ENCODE measurements at regions of chr3 and their contacts with region 1.

Region 1: GRCh38 chr3:186821429-186822367 is 15.4 kb upstream of the RFC4 start:
- DNase-seq: peak; percentile 60
- H3K4me3 Mint-ChIP-seq: no peak overlapping the region
- H3K27ac Mint-ChIP-seq: no peak overlapping the region
- H3K4me1 Mint-ChIP-seq: peaks cover 30% of the 10 kb centered on the region
- H3K27me3 Mint-ChIP-seq: peaks cover 34% of the 10 kb centered on the region
- CTCF ChIP-seq: peak; percentile 57

Region 2: DNA sequence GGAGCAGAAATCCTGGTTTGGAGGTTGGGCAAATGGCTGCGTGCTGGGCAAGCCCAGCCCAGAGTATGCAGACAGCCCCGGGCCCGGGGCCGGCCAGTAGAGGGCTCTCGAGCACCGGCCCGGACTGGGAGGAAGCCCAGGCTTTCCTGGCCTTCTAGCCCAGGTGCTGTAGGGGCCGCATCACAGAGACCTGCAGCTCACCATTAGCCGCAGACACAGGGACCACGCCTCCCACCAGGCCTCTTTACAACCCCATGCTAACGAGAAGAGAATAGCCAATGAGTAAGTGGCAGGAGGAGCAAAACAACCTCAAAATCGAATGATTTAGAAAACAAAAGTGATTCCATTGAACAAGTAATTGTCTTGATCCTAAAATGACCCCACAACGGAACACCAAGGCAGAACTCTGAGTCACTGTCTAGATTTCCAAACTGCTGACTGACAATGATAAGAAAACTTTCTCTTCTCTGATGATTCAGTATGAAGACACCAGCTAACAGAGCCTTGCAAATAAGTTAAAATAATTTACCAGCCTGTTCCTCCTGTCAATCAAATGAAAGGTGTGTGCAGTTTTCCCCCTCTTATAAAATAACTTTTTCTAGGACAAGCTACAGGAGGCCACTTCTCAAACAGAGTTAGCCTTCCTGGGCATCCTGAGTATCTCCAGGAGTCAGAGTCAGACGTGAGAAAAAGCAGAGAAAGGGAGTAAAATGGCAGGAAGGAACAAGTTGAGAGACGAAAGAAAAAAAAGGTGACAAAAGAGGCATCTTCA is 561.9 kb before region 1 on chr3:
- CTCF ChIA-PET with region 1: no interaction called
- intact Hi-C with region 1: loop called (anchors 2 kb)
- DNase-seq: peak; percentile 93
- H3K4me3 Mint-ChIP-seq: no peak overlapping the region
- H3K27ac Mint-ChIP-seq: no peak overlapping the region
- H3K4me1 Mint-ChIP-seq: peaks cover 27% of the 10 kb centered on the region
- H3K27me3 Mint-ChIP-seq: peaks cover 53% of the 10 kb centered on the region
- CTCF ChIP-seq: peak; percentile 95

Region 3: GRCh38 chr3:186589121-186589520 is 232.6 kb before region 1 on chr3:
- CTCF ChIA-PET with region 1: no interaction called
- intact Hi-C with region 1: loop called (anchors 1 kb)
- DNase-seq: peak; percentile 44
- H3K4me3 Mint-ChIP-seq: no peak overlapping the region
- H3K27ac Mint-ChIP-seq: peak overlapping the region; percentile 64
- H3K4me1 Mint-ChIP-seq: peaks cover 45% of the 10 kb centered on the region
- H3K27me3 Mint-ChIP-seq: no peaks in the 10 kb centered on the region
- CTCF ChIP-seq: peak; percentile 63

Region 4: GRCh38 chr3:186746008-186746407 is 75.7 kb before region 1 on chr3:
- CTCF ChIA-PET with region 1: no interaction called
- intact Hi-C with region 1: no loop called
- DNase-seq: peak; percentile 92
- H3K4me3 Mint-ChIP-seq: peak overlapping the region; percentile 16
- H3K27ac Mint-ChIP-seq: peak overlapping the region; percentile 94
- H3K4me1 Mint-ChIP-seq: peaks cover 68% of the 10 kb centered on the region
- H3K27me3 Mint-ChIP-seq: no peaks in the 10 kb centered on the region
- CTCF ChIP-seq: no peak